GM18951 (cell line): ENCODE measurements at regions of chr1 and their contacts with region 1.

Region 1: GRCh38 chr1:89762779-89763648 is 57.8 kb upstream of the LRRC8D start:
- POLR2A ChIP-seq: no peak

Region 2: DNA sequence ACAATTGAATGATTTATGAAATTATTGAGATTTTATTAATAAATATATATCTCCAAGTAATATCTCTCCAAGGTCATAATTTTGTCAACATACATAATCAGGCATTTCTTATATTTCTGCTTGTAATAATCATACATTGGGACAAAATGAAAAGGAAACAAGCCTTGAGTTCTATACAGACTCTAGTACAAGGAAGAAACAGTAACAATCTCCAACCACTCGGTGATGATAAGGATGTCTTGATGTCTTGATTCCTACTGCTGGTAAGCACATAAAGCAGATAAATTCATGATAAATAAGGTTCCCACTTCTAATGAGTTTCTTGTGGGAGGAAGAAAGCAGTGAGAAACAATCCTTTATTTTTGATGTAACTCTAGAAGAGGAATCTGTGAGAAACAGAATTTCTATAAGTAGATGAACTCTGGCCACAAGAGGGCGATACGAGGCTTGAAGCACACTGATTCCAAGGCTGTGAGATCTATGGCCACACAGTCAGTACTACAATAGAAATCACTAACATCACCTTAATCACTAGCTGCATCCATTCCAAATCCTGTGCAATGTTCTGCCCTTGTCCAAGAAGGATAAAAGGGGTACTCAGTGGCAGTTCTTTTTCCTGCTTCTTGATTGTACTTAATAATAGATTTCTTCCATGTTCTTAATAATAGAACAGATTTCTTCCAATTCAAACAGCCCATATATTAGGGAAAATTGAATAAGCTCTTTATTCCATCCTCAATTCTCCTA is 279.8 kb before region 1 on chr1:
- in situ Hi-C with region 1: loop called (anchors 25 kb)
- POLR2A ChIP-seq: no peak

Region 3: DNA sequence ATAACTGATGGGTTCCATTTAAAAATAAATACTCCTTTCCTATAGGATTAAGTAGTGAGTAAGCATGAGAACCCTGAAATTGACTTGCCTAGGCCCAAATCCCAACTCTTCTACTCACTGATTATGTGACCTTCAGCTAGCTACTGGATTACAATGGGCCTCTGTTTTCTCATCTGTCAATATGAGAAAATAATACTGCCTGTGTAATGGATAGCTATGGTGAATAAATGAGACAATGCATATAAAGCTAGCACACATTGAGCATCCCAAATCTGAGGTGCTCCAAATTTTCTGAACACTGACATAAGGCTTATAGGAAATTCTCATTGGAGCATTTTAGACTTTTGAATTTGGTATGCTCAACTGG is 135.4 kb before region 1 on chr1:
- in situ Hi-C with region 1: loop called (anchors 5 kb)
- POLR2A ChIP-seq: no peak

Region 4: DNA sequence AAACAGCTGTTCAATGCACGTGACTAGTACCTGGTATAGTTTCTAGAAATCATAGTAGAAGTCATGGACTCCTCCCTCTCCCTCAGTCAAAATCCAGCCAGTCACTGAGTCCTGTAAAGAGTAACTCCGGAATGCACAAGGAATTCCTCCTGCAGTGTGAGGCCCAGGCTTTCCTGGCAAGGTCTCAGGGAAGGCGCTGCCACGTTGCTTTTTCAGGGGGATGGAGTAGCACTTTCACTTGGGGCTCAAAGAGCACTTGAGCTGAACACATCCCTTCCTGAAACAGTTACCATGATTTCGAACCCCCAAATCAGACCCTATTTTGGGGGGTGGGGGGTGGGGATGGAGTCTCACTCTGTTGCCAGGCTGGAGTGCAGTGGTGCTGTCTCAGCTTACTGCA is 31.4 kb after region 1 on chr1:
- in situ Hi-C with region 1: no loop called
- POLR2A ChIP-seq: no peak